CD14-positive monocyte (primary cell): ENCODE measurements at regions of chr14 and their contacts with region 1.

Region 1: DNA sequence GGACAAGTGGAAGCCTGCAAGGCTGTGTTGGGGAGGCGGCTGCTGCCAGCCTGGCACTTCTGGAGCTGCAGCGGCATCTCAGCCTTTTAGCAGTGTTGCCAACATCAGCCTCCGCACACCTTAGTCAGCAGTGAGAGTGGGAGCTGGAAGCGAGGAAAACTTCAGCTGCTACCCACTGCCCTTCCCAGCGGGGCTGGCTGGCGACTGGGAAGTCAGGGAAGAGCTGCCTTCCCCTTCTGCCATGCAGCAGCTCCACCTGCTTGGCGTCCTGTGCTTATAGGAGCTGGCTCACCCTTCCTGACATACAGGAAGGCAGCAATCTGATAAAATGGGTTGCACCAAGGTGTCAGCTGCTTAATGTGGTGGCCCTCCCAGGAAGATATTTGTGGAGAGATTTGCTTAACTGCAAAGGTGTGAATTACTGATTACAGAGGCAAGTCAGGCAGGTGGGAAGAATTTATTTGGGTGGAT is 15.4 kb upstream of the PLEKHG3 start:
- DNase-seq: no peak
- H3K4me3 ChIP-seq: no peak overlapping the region
- H3K4me3 Mint-ChIP-seq: peak overlapping the region in 1 of 2 donors; percentile 80
- H3K27ac ChIP-seq: no peak overlapping the region
- H3K27ac Mint-ChIP-seq: no peak overlapping the region
- H3K4me1 ChIP-seq: peaks cover 42 to 48% of the 10 kb centered on the region in 2 donors
- H3K4me1 Mint-ChIP-seq: peaks cover 43% of the 10 kb centered on the region
- H3K27me3 ChIP-seq: peaks cover 10 to 18% of the 10 kb centered on the region in 2 donors
- H3K27me3 Mint-ChIP-seq: peaks cover 21 to 49% (median 32%) of the 10 kb centered on the region in 3 donors
- CTCF ChIP-seq: no peak

Region 2: DNA sequence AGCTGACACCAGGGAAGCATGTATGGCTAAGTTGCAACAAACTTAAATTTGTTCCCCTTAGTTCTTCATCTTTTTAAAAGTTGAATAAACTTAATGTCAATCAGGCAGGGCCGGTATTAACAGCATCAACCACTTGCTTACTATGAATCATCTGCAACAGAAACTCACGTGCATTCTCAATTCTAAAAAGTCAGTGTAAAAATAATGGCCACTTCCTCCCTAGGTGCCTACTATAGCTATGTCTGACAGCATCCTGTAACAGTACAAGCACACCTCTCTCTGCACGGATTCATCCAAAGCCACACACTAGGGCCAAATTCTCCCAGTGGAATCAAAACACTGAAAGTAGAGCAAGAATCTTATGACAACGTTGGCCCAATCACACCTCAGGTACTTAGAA is 90.4 kb before region 1 on chr14:
- intact Hi-C with region 1: no loop called
- DNase-seq: no peak
- H3K4me3 ChIP-seq: no peak overlapping the region
- H3K4me3 Mint-ChIP-seq: no peak overlapping the region
- H3K27ac ChIP-seq: no peak overlapping the region
- H3K27ac Mint-ChIP-seq: no peak overlapping the region
- H3K4me1 ChIP-seq: no peaks in the 10 kb centered on the region
- H3K4me1 Mint-ChIP-seq: peaks cover 3% of the 10 kb centered on the region
- H3K27me3 ChIP-seq: peaks cover 3 to 6% of the 10 kb centered on the region in 2 donors
- H3K27me3 Mint-ChIP-seq: peaks cover 7 to 27% (median 9%) of the 10 kb centered on the region in 3 donors
- CTCF ChIP-seq: no peak

Region 3: GRCh38 chr14:64758691-64759584 is 70.1 kb after region 1 on chr14:
- intact Hi-C with region 1: loop called in 1 of 2 experiments (anchors 5 kb)
- DNase-seq: no peak
- H3K4me3 ChIP-seq: no peak overlapping the region
- H3K4me3 Mint-ChIP-seq: no peak overlapping the region
- H3K27ac ChIP-seq: no peak overlapping the region
- H3K27ac Mint-ChIP-seq: peak overlapping the region in 2 of 7 donors; percentile 44 to 46
- H3K4me1 ChIP-seq: peaks cover 0 to under 1% of the 10 kb centered on the region in 2 donors
- H3K4me1 Mint-ChIP-seq: peaks cover 19% of the 10 kb centered on the region
- H3K27me3 ChIP-seq: peaks cover 0 to 28% of the 10 kb centered on the region in 2 donors
- H3K27me3 Mint-ChIP-seq: peaks cover 34 to 44% (median 41%) of the 10 kb centered on the region in 3 donors
- CTCF ChIP-seq: no peak

Region 4: DNA sequence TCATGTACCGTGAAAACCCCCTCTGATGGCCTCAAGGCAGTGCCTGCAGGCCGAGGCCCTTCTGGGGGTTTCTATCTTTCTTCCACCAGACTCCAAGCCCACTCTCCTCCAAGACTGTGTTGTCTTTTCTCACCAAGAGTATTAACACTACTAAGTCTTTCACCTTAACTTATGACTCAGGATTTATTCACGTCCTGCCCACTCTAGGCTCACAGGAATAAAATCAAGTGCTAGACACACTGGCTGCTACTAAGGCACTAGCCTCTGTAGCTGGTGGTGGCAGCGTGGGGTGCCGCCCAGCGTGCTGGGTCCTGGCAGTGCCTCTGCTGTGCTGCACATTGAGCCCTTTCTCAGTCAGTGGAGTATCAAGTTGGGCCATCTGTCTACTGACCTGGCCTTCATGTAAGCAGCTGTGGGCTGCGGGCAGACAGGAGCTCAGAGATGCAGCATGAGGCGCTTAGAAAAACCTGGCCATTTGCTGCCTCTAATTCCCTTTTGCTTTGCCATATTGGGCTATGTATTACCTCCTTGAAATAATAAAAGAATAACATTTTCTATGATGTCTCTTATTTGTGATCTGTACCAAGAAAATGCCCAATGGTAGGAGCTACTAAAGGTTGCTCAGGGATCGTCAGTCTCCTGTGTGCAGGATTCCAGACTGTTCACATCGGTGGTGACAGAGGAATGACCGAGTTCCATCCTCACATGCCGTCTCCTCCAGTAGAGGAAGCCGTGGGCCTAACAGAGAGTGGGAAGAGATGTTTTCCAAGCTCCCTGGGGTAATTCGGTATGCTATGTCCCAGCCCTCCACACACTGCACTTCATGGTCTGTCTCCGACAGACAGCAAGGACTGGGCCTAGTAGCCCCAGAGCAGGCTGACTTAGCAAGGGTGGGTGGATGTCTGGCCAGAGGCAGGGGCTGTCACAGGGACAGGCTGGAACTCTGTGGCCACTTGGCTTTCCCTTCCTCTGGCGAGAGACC is 373.5 kb after region 1 on chr14:
- intact Hi-C with region 1: no loop called
- DNase-seq: no peak
- H3K4me3 ChIP-seq: no peak overlapping the region
- H3K4me3 Mint-ChIP-seq: no peak overlapping the region
- H3K27ac ChIP-seq: peak overlapping the region in 1 of 2 donors; percentile 20
- H3K27ac Mint-ChIP-seq: peak overlapping the region in 4 of 7 donors; percentile 9 to 58 (median 46)
- H3K4me1 ChIP-seq: no peaks in the 10 kb centered on the region
- H3K4me1 Mint-ChIP-seq: no peaks in the 10 kb centered on the region
- H3K27me3 ChIP-seq: no peaks in the 10 kb centered on the region
- H3K27me3 Mint-ChIP-seq: no peaks in the 10 kb centered on the region
- CTCF ChIP-seq: no peak

Region 5: DNA sequence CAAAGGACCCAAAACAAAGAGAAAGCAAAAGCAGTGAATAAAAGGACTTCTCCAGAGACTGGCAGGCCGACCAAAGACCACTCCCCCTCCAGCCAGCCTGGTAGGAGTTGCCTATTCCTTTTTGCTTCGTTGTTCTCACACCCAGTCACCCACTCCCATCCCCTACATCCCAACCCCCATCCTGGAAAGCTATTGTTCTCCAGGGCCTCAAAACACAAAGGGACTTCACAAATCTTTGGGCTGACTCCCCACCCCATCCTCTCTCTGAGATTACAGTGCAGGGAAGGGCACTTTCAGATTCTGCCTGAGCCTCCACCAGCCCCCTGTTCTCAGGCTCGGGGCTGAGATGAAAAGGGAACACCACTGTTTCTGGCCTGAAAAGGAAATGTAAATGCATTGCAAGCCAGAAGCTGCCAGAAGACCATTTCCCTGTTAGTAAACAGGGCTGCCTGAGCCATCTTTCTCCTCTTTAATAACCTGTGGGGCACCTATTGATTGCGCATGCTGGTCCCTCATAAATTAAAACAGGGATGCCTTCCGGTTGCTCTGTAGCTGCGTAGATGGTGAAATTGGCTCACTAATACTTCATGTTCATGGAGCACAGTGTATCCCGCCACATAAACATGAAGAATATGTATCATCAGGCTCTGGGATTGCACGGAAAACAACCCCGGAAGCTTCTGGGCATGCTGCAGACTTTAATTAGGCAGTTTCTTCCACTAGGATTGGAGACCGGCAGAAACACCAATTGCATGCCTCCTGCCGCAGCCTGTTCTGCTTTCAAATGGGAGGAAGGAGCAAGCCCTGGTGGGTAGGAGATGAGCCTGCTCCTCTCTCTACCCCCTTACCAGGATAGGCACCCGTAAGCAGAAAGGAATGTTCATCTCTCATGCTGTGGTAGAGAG is 593.4 kb after region 1 on chr14:
- intact Hi-C with region 1: no loop called
- DNase-seq: no peak
- H3K4me3 ChIP-seq: peak overlapping the region in 2 of 3 experiments; percentile 2 to 31
- H3K4me3 Mint-ChIP-seq: peak overlapping the region; percentile 75 to 92
- H3K27ac ChIP-seq: no peak overlapping the region
- H3K27ac Mint-ChIP-seq: peak overlapping the region in 3 of 7 donors; percentile 56 to 78 (median 61)
- H3K4me1 ChIP-seq: peaks cover 9 to 12% of the 10 kb centered on the region in 2 donors
- H3K4me1 Mint-ChIP-seq: peaks cover 14% of the 10 kb centered on the region
- H3K27me3 ChIP-seq: no peaks in the 10 kb centered on the region
- H3K27me3 Mint-ChIP-seq: peaks cover 0 to 2% (median 1%) of the 10 kb centered on the region in 3 donors
- CTCF ChIP-seq: no peak